Activated CD4-positive, alpha-beta T cell treated with anti-CD3 and anti-CD28 coated beads for 36 hours (primary cell): ENCODE measurements at regions of chr1 and their contacts with region 1.

Region 1: DNA sequence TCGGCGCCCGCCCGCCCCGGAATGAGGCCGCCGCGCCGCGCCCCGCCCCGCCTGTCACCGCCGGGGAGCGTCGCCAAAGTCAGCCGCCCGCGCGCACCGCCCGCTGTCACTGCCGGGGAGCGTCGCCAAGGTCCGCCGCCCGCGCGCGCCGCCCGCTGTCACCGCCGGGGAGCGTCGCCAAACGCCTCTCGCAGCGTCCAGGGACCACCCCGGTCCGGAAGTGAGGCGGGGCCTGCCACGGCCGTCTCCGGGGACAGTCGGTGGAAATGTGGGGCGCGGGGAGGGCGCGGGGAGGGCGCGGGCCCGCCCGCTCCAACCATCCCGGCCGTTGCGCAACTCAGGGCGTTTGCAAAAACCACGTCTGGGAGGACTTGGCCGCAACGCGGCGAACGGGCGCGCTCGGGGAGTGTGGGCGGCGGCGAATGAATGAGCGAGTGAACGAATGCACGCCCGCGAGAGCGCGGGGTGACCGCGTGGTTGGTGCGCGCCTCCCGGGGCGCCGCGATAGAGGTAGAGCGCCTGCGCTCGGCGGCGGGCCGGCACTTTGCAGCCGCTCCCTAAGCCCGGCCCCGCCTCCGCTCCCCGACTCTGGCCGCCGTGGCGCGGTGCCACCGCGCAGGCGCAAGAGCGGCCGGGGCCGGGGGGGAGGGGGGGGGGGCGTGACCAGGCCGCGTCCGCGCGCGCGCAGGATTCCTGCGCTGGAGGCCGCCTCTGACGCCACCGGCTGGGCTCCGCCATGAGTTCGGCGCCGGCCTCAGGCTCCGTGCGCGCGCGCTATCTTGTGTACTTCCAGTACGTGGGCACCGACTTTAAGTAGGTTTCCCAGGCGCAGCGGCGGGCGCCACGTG is at the starts of genes ACAP3 and PUSL1:
- DNase-seq: peak; percentile 94
- ATAC-seq: peak; percentile 73
- H3K4me3 Mint-ChIP-seq: peak within 1 kb of the TSS; percentile 80
- H3K27ac Mint-ChIP-seq: peak within 1 kb of the TSS; percentile 84
- H3K4me1 Mint-ChIP-seq: peaks cover 23% of the 10 kb centered on the region
- H3K27me3 Mint-ChIP-seq: no peaks in the 10 kb centered on the region
- total RNA-seq, gene ACAP3: 17.5 to 24.3 TPM
- total RNA-seq, gene PUSL1: 13.7 to 18.0 TPM

Region 2: DNA sequence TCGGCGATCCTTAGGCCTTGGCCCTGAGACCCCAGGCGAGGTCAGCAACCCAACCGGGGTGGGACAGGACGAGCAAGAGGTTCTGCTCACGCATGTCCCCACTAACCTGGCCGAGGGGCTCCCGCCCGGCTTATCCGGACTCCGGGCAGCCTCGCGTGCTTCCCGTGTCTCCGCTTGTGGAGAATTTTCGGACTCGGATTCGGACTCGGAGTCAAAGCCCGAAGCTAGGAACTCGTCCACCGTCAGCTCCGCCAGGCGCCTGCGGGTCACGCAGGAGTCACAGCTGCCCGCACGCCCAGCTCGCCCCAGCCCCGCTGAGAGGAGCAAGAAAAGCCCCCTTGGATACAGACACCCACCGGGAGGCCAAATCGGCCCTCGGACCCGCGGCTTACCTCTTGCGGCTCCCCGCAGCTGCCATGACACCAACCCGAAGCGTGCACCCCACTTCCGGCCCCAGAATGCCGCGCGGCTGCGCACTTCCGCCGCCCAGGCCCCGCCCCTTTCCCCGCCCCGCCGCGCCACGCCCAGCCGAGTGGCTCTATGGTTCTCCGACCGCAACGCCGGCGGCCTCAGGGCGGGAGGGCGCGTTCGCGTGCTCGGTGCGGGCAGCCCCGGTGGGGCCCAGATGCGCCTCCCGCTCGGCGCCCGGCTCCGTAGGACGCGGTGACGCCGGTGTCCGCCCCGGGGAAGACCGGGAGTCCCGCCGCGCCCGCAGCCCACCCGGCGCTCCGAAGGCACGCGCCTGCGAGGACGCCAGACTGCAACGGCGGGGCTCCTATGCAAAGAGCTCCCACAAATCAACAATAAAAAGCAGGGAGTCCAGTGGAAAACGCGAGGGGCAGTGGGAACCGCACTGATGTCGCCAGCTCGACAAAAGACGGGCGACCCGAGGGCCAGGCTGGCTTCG is 349.1 kb before region 1 on chr1 and contains the start of gene NOC2L:
- CTCF ChIA-PET with region 1: no interaction called
- POLR2A ChIA-PET with region 1: no interaction called
- intact Hi-C with region 1: loop called in 1 of 2 experiments (anchors 1 kb)
- DNase-seq: peak; percentile 98
- ATAC-seq: peak; percentile 86
- H3K4me3 Mint-ChIP-seq: peak within 1 kb of the TSS; percentile 82
- H3K27ac Mint-ChIP-seq: peak within 1 kb of the TSS; percentile 63
- H3K4me1 Mint-ChIP-seq: peaks cover 18% of the 10 kb centered on the region
- H3K27me3 Mint-ChIP-seq: no peaks in the 10 kb centered on the region
- total RNA-seq, gene NOC2L: 112 to 134 TPM

Region 3: DNA sequence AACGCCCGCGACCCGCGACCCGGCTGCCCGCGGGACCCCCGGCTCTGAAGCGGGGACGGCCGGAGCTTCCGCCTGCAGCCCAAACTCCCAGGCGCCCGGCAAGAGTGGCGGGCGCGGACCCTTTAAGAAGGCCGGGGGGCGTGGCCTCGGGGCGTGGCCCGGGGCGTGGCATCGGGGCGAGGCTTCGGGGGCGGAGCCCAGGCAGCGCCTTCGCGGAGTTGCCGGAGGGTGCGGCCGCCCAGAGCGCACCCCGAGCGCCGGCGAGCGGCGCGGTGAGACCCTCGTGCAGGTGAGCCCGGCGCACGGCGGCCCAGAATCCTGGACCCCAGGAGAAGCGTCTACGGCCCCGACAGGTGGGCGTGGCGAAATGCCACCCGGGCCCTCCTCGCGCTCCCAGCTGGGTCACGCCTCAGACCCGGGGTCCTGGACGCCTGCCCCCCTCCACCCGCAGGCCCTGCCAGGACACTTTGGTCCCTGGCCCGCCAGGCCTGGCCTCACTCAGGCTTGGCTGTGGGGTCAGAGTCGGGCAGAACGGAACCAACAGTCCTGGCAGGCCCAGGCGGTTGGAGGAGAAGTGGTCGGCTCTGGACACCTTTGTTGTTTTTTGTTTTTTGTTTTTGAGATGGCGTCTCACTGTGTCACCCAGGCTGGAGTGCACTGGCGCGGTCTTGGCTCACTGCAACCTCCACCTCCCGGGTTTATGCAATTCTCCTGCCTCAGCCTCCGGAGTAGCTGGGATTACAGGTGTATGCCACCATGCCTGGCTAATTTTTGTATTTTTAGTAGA is 248.4 kb before region 1 on chr1:
- CTCF ChIA-PET with region 1: interaction called, 4 read pairs
- POLR2A ChIA-PET with region 1: no interaction called
- intact Hi-C with region 1: loop called in 1 of 2 experiments (anchors 1 kb)
- DNase-seq: peak; percentile 95
- ATAC-seq: peak; percentile 51
- H3K4me3 Mint-ChIP-seq: peak overlapping the region; percentile 82
- H3K27ac Mint-ChIP-seq: no peak overlapping the region
- H3K4me1 Mint-ChIP-seq: peaks cover 29% of the 10 kb centered on the region
- H3K27me3 Mint-ChIP-seq: peaks cover 20% of the 10 kb centered on the region

Region 4: DNA sequence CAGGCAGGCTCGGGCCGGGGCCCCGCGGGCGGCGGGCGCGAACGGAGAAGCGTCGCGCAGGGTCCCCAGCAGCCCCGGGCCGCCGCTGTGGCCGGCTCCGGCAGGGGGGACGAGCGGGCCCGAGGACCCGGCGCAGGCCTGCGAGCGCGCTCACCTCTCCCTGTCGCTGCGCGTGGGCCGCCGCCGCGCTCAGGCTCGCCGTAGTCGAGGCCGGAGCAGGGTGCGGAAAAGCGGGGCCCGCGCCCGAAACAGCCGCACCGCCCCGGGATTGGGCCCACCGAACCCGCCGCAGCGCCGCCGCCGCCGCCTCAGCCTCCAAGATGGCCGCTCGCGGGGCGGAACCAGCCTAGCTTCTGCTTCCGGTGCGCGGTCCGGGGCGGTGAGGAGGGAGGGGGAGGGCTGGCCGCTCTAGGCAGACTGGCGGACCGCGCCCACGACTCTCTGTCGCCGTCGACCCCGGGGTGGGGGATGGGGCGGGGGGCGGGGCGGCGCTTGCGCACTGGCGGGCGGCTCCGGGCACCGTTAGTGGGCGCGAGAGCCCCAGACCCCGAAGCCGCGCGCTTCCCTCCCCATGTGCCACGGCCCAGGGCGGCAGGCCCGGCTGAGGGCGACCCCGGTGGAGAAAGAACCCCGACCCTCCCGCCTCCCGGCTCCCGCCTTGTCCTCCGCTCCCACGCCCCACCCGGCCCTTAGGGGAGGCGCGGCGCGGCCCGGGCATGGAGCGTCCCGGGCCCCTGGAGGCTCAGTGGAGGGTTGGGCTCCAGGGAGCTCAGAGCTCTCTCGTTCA is 34.4 kb before region 1 on chr1 and contains the start of gene UBE2J2:
- CTCF ChIA-PET with region 1: interaction called, 4 read pairs
- POLR2A ChIA-PET with region 1: no interaction called
- intact Hi-C with region 1: loop called (anchors 1 to 5 kb)
- DNase-seq: peak; percentile 97
- ATAC-seq: peak; percentile 94
- H3K4me3 Mint-ChIP-seq: peak within 1 kb of the TSS; percentile 85
- H3K27ac Mint-ChIP-seq: peak within 1 kb of the TSS; percentile 83
- H3K4me1 Mint-ChIP-seq: peaks cover 36% of the 10 kb centered on the region
- H3K27me3 Mint-ChIP-seq: no peaks in the 10 kb centered on the region
- total RNA-seq, gene UBE2J2: 57.4 to 60.2 TPM

Region 5: GRCh38 chr1:1374929-1375662 is 67.0 kb after region 1 on chr1 and contains the start of gene AURKAIP1:
- CTCF ChIA-PET with region 1: interaction called, 4 read pairs
- POLR2A ChIA-PET with region 1: interaction called, 4 read pairs
- intact Hi-C with region 1: loop called (anchors 1 to 2 kb)
- DNase-seq: peak; percentile 98
- ATAC-seq: peak; percentile 97
- H3K4me3 Mint-ChIP-seq: peak within 1 kb of the TSS; percentile 87
- H3K27ac Mint-ChIP-seq: peak within 1 kb of the TSS; percentile 91
- H3K4me1 Mint-ChIP-seq: peaks cover 26% of the 10 kb centered on the region
- H3K27me3 Mint-ChIP-seq: no peaks in the 10 kb centered on the region
- total RNA-seq, gene AURKAIP1: 89.5 to 117 TPM

Region 6: GRCh38 chr1:1471389-1472052 is 163.4 kb after region 1 on chr1 and contains the start of gene ATAD3B:
- CTCF ChIA-PET with region 1: no interaction called
- POLR2A ChIA-PET with region 1: no interaction called
- intact Hi-C with region 1: loop called in 1 of 2 experiments (anchors 1 kb)
- DNase-seq: peak; percentile 98
- ATAC-seq: peak; percentile 97
- H3K4me3 Mint-ChIP-seq: peak within 1 kb of the TSS; percentile 89
- H3K27ac Mint-ChIP-seq: peak within 1 kb of the TSS; percentile 67
- H3K4me1 Mint-ChIP-seq: peaks cover 21% of the 10 kb centered on the region
- H3K27me3 Mint-ChIP-seq: no peaks in the 10 kb centered on the region
- total RNA-seq, gene ATAD3B: 26.2 to 39.2 TPM

Region 7: DNA sequence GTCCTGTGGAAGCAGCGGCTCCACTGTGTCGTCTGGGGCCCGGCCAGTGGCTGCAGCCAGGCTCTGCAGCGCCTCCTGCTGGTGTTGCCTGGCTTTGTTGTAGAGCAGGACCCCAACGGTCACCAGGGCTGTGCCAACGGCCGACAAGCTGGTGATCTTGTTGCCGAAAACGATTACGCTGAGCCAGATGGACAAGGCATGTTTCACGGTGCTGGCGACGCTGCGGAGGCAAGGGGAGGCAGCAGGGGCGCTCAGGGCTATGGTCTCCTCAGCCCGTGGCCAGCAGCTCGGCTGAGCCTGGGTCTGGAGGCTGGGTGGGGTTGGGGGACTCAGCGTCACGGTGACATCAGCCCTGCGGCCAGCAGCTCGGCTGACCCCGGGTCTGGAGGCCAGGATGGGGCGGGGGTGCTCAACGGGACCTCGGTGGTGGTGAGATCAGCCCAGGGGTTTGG is 357.7 kb after region 1 on chr1:
- CTCF ChIA-PET with region 1: no interaction called
- POLR2A ChIA-PET with region 1: no interaction called
- intact Hi-C with region 1: no loop called
- DNase-seq: peak; percentile 64
- ATAC-seq: peak; percentile 57
- H3K4me3 Mint-ChIP-seq: no peak overlapping the region
- H3K27ac Mint-ChIP-seq: no peak overlapping the region
- H3K4me1 Mint-ChIP-seq: peaks cover 2% of the 10 kb centered on the region
- H3K27me3 Mint-ChIP-seq: no peaks in the 10 kb centered on the region

Region 8: GRCh38 chr1:1906185-1907097 is 598.3 kb after region 1 on chr1:
- CTCF ChIA-PET with region 1: no interaction called
- POLR2A ChIA-PET with region 1: no interaction called
- intact Hi-C with region 1: loop called in 1 of 2 experiments (anchors 1 kb)
- DNase-seq: peak; percentile 86
- ATAC-seq: peak; percentile 52
- H3K4me3 Mint-ChIP-seq: peak overlapping the region; percentile 0
- H3K27ac Mint-ChIP-seq: no peak overlapping the region
- H3K4me1 Mint-ChIP-seq: peaks cover 14% of the 10 kb centered on the region
- H3K27me3 Mint-ChIP-seq: no peaks in the 10 kb centered on the region